ENCODE measurements at regions of chr19 and their contacts with region 1.

Region 1: DNA sequence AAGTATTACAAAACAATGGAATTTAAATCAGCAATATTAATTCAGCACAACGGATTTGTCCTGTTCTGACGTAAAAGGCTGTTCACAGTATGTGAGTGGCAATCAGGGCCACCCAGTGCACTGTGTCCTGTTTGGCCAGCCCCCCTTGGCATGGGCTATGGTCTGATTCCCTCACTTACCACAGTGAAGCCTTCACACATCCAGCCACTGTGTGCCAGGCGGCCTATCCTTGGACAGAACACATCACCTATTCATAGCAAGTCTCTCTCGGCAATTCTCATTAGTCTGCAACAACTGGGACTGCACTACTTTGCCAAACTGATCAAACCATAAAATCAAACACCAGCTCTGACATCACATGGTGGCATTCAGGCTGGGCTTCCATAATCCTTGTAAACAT is 221.5 kb upstream of the TSHZ3 start:
- DNase-seq: no peak
- ATAC-seq: no peak
- H3K4me3 ChIP-seq: no peak overlapping the region
- H3K27ac ChIP-seq: no peak overlapping the region
- H3K4me1 ChIP-seq: no peaks in the 10 kb centered on the region
- H3K27me3 ChIP-seq: peaks cover 9% of the 10 kb centered on the region; the same call in 1 of the 2 replicates
- CTCF ChIP-seq: no peak

Region 2: GRCh38 chr19:31502536-31503170 is 68.1 kb before region 1 on chr19:
- CTCF ChIA-PET with region 1: no interaction called
- POLR2A ChIA-PET with region 1: interaction called, 11 read pairs
- in situ Hi-C with region 1: no loop called
- intact Hi-C with region 1: no loop called
- DNase-seq: no peak
- ATAC-seq: no peak
- H3K4me3 ChIP-seq: no peak overlapping the region
- H3K27ac ChIP-seq: no peak overlapping the region
- H3K4me1 ChIP-seq: no peaks in the 10 kb centered on the region
- H3K27me3 ChIP-seq: no peaks in the 10 kb centered on the region; the same call in 1 of the 2 replicates
- CTCF ChIP-seq: no peak

Region 3: DNA sequence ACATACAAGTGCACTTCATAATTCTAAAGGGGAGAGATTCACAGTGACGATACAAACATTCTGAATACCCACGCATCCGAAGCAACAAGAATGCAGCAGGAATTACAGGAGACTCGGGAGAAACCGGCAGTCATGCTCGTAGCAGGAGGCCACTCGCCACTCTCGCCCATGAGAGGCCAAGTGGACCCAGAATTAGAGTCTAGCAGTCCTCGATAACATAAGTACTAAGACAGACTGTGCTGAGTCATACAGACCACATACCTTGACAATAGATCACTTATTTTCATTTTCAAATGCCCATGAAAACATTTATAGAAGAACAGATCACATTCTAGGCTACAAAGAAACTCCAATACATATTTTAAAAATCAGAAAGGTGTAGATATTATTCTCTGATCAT is 77.6 kb after region 1 on chr19:
- CTCF ChIA-PET with region 1: no interaction called
- POLR2A ChIA-PET with region 1: no interaction called
- in situ Hi-C with region 1: no loop called
- intact Hi-C with region 1: no loop called
- DNase-seq: no peak
- ATAC-seq: no peak
- H3K4me3 ChIP-seq: no peak overlapping the region
- H3K27ac ChIP-seq: no peak overlapping the region
- H3K4me1 ChIP-seq: no peaks in the 10 kb centered on the region
- H3K27me3 ChIP-seq: no peaks in the 10 kb centered on the region
- CTCF ChIP-seq: no peak

Region 4: GRCh38 chr19:31804668-31805067 is 233.9 kb after region 1 on chr19:
- CTCF ChIA-PET with region 1: no interaction called
- POLR2A ChIA-PET with region 1: no interaction called
- in situ Hi-C with region 1: no loop called
- intact Hi-C with region 1: no loop called
- DNase-seq: no peak
- ATAC-seq: no peak
- H3K4me3 ChIP-seq: no peak overlapping the region
- H3K27ac ChIP-seq: no peak overlapping the region
- H3K4me1 ChIP-seq: no peaks in the 10 kb centered on the region
- H3K27me3 ChIP-seq: no peaks in the 10 kb centered on the region
- CTCF ChIP-seq: no peak

Measured in Panc1 (cell line).